Posterior vena cava (tissue), 2 donors: ENCODE measurements at regions of chr2 and their contacts with region 1.

Region 1: GRCh38 chr2:37337642-37338310 is 6.7 kb upstream of the QPCT start:
- DNase-seq: no peak

Region 2: GRCh38 chr2:37350034-37350433 is 12.3 kb after region 1 on chr2:
- intact Hi-C with region 1: no loop called
- DNase-seq: no peak

Region 3: DNA sequence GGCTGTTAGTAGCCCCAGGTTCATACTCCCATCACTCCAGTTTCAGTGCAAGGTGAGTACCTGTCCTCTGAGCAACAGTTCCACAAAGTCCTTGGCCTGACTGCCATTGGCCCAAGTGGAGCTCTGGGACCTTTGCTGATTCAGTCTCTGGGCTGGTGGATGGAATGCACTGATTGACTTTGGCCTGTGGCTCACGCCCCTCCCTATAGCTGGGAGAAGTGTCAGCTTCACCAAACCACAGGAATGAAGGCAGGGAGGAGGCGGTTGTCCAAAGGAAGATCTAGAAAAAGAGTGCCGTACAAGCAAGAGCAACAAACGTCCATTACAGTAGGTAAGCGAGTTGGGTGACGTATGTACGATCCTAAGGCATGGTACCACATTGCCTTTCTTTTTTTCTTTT is 40.6 kb after region 1 on chr2:
- intact Hi-C with region 1: loop called in 1 of 2 experiments (anchors 1 kb)
- DNase-seq: no peak